ENCODE measurements at regions of chr6 and their contacts with region 1.

Region 1: DNA sequence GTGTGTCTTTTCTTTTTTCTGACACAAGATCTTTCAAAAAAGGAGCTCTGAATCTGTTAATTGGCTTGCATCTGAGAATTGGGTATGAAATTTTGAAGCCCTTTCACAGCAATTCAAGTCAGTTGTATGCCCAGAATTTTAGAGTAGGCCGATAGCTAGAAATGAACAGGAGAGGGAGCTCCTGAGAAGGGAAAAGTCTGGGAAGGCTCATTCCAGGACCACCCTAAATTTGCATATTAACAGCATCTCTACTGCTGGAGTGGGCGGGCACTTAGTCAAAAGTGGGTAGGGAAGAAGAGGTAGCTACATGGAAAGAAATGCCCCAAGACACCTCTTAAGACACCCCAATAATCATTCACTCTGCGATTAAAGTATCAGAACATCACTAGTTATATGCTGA is 928.3 kb downstream of the TBC1D32 start:
- DNase-seq: peak; percentile 40
- ATAC-seq: peak; percentile 100
- H3K4me3 Mint-ChIP-seq: no peak overlapping the region
- H3K27ac Mint-ChIP-seq: no peak overlapping the region
- H3K4me1 Mint-ChIP-seq: peaks cover 4% of the 10 kb centered on the region; the same call in 1 of the 2 replicates
- H3K27me3 Mint-ChIP-seq: no peaks in the 10 kb centered on the region; the same call in 1 of the 2 replicates
- CTCF ChIP-seq: no peak

Region 2: GRCh38 chr6:120496661-120497060 is 90.7 kb after region 1 on chr6:
- CTCF ChIA-PET with region 1: no interaction called
- POLR2A ChIA-PET with region 1: no interaction called
- DNase-seq: no peak
- ATAC-seq: no peak
- H3K4me3 Mint-ChIP-seq: no peak overlapping the region
- H3K27ac Mint-ChIP-seq: no peak overlapping the region
- H3K4me1 Mint-ChIP-seq: no peaks in the 10 kb centered on the region
- H3K27me3 Mint-ChIP-seq: no peaks in the 10 kb centered on the region
- CTCF ChIP-seq: no peak

Region 3: DNA sequence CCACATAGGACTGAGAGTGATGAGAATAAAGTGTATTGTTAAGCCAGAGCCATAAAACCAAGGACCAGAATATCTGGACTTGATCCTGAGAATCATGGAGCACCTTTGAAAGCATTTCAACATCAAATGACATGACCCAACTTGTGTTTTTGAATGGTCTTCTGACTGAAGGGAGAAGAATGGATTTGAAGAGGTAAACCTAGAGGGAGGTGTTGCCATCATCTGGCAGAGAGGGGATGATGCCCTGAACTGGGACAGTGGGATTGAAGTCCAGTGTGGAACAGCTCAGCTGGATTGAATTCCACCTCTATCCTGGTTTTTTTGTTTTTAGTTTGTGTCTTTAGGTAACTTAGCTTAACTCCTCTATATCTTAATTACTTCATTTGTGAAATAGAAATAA is 358.4 kb after region 1 on chr6:
- CTCF ChIA-PET with region 1: interaction called, 10 read pairs
- POLR2A ChIA-PET with region 1: no interaction called
- DNase-seq: no peak
- ATAC-seq: peak; percentile 79
- H3K4me3 Mint-ChIP-seq: no peak overlapping the region
- H3K27ac Mint-ChIP-seq: no peak overlapping the region
- H3K4me1 Mint-ChIP-seq: peaks cover 8% of the 10 kb centered on the region; the same call in 1 of the 2 replicates
- H3K27me3 Mint-ChIP-seq: no peaks in the 10 kb centered on the region
- CTCF ChIP-seq: no peak